ENCODE measurements at regions of chr17 and their contacts with region 1.

Region 1: GRCh38 chr17:50308666-50309065 is 34.4 kb downstream of the TMEM92 start:
- DNase-seq: no peak
- H3K4me3 Mint-ChIP-seq: no peak overlapping the region
- H3K27ac Mint-ChIP-seq: peak overlapping the region; percentile 79
- H3K4me1 Mint-ChIP-seq: peaks cover 43% of the 10 kb centered on the region
- H3K27me3 Mint-ChIP-seq: peaks cover 4% of the 10 kb centered on the region

Region 2: GRCh38 chr17:50326831-50327364 is 18.2 kb after region 1 on chr17:
- intact Hi-C with region 1: loop called (anchors 1 kb)
- DNase-seq: no peak
- H3K4me3 Mint-ChIP-seq: no peak overlapping the region
- H3K27ac Mint-ChIP-seq: peak overlapping the region; percentile 55
- H3K4me1 Mint-ChIP-seq: peaks cover 6% of the 10 kb centered on the region
- H3K27me3 Mint-ChIP-seq: no peaks in the 10 kb centered on the region

Region 3: DNA sequence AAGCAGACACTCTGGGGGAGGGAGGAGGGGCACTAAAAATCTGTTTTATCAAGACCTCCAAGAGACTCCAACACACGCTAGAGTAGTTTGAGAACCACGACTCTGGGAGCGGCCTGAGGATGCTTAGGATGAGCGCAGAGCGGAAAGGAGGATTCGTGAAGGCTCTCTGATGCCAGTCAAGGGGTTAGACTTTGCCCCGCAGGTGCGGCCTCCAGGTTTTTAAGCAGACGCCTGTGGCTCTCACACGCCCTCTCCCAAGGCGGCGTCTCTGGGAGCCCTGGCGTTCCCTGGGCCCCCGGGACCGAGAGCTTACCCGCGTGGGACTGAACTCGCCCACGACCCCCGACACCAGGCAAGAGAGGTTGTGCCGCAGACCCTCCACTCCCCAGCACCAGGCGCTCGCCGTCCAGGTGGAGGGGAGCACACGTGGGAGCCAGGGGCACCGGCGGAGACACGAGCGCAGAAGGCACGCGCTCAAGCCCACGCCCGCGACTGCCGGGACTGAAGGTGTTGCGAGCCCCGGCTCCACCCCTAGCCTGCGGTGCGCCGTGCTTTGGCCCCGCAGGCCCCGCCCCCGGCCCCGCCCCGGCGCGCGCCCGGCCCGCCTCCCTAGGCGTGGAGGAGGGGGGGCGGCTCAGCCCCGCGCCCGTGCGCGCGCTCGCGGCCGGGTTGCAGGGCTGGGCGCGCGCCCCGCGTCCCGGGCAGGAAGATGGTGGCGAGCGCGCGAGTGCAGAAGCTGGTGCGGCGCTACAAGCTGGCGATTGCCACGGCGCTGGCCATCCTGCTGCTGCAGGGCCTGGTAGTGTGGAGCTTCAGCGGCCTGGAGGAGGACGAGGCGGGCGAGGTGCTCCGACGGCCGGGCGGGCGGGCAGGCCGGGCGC is 37.0 kb after region 1 on chr17 and contains the start of gene XYLT2:
- intact Hi-C with region 1: loop called (anchors 2 kb)
- DNase-seq: peak; percentile 87
- H3K4me3 Mint-ChIP-seq: peak within 1 kb of the TSS; percentile 94
- H3K27ac Mint-ChIP-seq: peak within 1 kb of the TSS; percentile 95
- H3K4me1 Mint-ChIP-seq: peaks cover 39% of the 10 kb centered on the region
- H3K27me3 Mint-ChIP-seq: peaks cover 4% of the 10 kb centered on the region
- total RNA-seq, gene XYLT2: 63.0 and 63.9 TPM in 2 replicates

Region 4: DNA sequence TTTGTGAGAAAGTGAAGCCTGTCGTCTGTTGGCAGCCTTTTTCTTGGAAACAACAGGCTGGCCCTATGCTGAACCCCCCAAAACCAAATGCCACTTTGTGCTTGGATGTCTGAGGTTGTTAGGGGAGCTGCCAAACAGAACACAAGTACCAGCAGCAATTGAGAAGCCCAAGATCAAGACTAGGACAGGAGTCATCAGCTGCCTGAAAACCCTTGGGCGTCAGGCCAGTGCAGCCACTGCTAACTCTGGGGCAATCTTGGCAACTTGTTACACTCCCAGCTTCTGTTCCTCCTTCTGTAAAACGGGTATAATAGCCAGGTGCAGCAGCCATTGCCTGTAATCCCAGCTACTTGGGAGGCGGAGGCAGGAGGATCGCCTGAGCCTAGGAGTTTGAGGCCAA is 97.9 kb after region 1 on chr17:
- intact Hi-C with region 1: no loop called
- DNase-seq: no peak
- H3K4me3 Mint-ChIP-seq: no peak overlapping the region
- H3K27ac Mint-ChIP-seq: no peak overlapping the region
- H3K4me1 Mint-ChIP-seq: no peaks in the 10 kb centered on the region
- H3K27me3 Mint-ChIP-seq: peaks cover 25% of the 10 kb centered on the region

Measured in activated T-helper 1 cell treated with anti-CD3 and anti-CD28 coated beads, Interleukin-12 subunit alpha, Interleukin-12 subunit beta, Interleukin-2, Interleukin-4 antibody, amounts not matched to agents 30 ng/mL and 10 ng/mL and 1 ng/mL, durations not matched to agents 14 hours and 24 hours and 36 hours (primary cell).